ENCODE measurements at regions of chr10 and their contacts with region 1.

Region 1: DNA sequence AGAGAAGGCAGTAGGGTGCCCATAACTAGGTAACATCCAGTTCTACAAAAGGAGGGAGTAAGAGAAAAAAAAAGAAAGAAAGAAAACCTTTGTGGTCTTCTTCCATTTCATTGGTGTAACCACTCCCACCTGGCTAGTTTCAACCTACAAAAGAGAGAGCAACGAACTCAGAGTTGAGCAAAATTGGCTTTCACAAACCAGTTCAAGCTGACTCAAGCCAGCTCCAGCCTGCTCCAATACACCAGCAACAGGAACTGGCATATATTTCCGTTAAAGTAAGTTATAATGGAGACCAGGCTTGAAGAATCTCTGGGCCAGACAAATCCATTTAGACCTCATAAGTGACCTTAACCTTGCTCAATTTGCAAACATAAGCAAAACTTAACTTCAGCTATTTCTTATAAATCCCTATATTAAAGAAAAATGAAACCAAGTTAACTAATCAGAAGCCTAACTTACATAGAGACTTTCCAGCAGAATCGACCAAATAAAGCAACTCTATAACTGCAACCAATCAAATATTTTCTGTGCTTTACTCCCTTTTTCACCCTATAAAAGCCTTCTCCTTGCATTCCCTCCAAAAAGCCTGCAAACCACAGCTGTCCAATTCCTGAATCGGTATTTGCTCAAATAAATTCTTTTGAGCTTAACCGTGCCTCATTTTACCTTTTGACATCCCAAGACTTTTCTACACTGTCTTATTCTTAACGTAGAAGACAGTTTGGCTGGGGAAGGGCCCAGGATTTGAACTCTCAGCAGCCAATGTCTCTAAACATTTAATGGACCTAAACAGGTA is 10.1 kb downstream of the ANKRD22 start:
- DNase-seq: no peak

Region 2: DNA sequence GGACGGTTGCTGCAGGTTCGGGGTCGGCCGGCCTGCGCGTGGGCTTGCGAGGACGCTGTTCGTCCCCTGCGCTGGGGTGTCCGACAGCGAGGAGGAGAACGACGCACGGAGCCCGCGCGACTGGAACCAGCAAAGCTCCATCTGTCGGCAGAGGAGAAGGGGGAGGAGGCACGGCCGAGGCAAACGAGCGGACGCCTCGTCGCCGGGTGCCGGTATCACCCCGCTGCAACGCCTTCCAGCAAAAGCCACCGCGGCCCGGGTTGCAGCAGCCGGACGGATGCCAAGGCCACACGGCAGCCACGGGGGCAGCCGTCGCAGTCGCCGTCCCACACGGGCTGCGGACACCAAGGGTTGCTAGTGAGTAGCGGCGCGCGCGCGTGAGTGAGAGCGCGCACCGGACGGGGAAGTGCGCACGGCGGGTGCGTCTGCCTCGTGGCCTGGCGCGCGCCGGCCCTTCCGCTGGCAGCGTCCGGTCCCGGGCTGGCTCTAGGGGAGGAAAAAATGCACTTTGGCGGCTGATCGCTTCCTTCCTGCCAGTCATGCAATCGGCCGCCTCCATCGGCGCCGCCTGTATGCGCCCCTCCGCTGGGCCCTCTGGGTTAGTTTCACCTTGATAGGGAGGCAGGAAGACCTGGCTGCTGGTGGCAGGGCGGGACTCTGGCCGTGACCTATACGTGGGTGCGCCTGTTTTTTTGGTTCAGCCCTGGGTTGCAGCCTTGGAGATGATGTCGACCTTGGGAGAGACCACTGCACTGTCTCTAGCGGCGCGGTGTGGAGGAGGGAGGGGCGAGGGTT is 39.0 kb after region 1 on chr10:
- intact Hi-C with region 1: loop called in 1 of 2 experiments (anchors 5 kb)
- DNase-seq: peak; percentile 96